Naive thymus-derived CD4-positive, alpha-beta T cell (primary cell): ENCODE measurements at regions of chr12 and their contacts with region 1.

Region 1: DNA sequence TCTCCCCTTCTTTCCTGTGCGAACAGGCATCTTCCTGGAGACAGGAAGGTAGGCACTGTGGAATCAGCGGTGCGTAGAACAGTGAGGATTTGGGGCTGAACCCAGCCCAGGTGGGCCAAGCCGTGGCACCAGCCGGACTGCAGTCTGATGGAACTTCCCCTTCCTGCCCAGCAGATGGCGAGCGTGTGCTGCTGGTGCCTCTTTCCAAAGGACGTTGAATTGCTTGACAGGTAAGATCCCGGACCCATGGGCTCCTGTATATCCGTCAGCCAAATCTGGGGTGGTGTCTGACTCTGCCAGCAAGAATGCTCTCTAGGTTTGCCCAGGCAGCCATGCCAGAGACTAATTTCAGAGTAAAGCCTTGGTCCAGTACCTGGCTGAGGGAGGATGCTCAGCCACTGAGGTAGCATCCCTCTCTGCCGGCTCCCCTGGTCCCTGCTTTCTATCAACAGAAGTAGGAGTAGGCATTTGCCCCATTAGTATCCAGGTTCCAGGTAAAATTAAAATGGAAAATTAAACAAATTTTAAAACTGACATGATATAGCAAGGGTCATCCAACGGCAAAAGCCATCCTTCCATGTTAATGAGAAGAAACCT is 21.1 kb upstream of the KCNA5 start:
- DNase-seq: peak in 6 of 9 donors; percentile 10 to 38 (median 18)
- ATAC-seq: peak; percentile 50
- H3K4me3 ChIP-seq: no peak overlapping the region
- H3K4me3 Mint-ChIP-seq: no peak overlapping the region
- H3K27ac ChIP-seq: no peak overlapping the region
- H3K27ac Mint-ChIP-seq: no peak overlapping the region
- H3K4me1 ChIP-seq: no peaks in the 10 kb centered on the region
- H3K4me1 Mint-ChIP-seq: peaks cover 0 to 1% (median 0%) of the 10 kb centered on the region in 7 donors
- H3K27me3 ChIP-seq: no peaks in the 10 kb centered on the region
- H3K27me3 Mint-ChIP-seq: peaks cover 23 to 44% (median 38%) of the 10 kb centered on the region in 5 donors

Region 2: DNA sequence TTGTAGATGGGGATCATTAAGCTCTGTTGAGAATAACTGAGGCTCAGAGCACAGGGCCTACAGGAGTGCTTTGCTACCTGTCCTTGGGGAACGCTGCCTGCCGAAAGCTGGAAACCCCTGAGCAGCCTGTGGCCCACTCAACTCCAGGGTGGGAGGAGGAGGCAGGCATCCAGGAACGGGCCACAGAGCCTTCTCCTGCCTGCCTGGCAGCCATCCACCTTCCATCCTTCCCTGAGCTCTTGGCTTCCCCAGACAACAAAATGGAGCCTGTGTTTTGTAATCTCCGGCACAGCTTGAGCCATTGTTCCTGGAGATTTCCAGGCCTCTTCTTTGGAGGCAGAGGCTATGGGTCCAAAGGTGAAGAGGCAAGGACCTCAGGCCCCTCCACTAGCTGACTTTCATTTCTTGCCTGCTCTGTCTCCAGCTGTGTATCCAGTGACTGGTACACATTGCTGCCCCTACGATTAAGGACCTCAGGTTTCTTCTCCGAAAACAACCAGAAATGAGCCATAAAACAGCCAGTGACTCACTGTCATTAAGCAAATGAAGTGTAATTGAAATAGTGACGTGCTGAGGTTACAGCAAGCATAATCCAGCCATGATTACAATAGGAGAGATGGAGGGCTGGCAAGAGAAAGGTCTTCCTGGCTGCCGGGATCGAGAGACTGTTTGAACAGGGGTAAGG is 35.3 kb before region 1 on chr12:
- CTCF ChIA-PET with region 1: no interaction called
- POLR2A ChIA-PET with region 1: no interaction called
- intact Hi-C with region 1: no loop called
- DNase-seq: no peak
- ATAC-seq: no peak
- H3K4me3 ChIP-seq: no peak overlapping the region
- H3K4me3 Mint-ChIP-seq: no peak overlapping the region
- H3K27ac ChIP-seq: no peak overlapping the region
- H3K27ac Mint-ChIP-seq: no peak overlapping the region
- H3K4me1 ChIP-seq: no peaks in the 10 kb centered on the region
- H3K4me1 Mint-ChIP-seq: no peaks in the 10 kb centered on the region
- H3K27me3 ChIP-seq: no peaks in the 10 kb centered on the region
- H3K27me3 Mint-ChIP-seq: peaks cover 8 to 37% (median 17%) of the 10 kb centered on the region in 5 donors

Region 3: GRCh38 chr12:5083955-5084849 is 61.6 kb after region 1 on chr12:
- CTCF ChIA-PET with region 1: no interaction called
- POLR2A ChIA-PET with region 1: no interaction called
- intact Hi-C with region 1: loop called (anchors 1 kb)
- DNase-seq: no peak
- ATAC-seq: no peak
- H3K4me3 ChIP-seq: no peak overlapping the region
- H3K4me3 Mint-ChIP-seq: no peak overlapping the region
- H3K27ac ChIP-seq: no peak overlapping the region
- H3K27ac Mint-ChIP-seq: no peak overlapping the region
- H3K4me1 ChIP-seq: no peaks in the 10 kb centered on the region
- H3K4me1 Mint-ChIP-seq: no peaks in the 10 kb centered on the region
- H3K27me3 ChIP-seq: no peaks in the 10 kb centered on the region
- H3K27me3 Mint-ChIP-seq: peaks cover 0 to 9% (median 0%) of the 10 kb centered on the region in 5 donors

Region 4: GRCh38 chr12:5442251-5443006 is 419.9 kb after region 1 on chr12:
- CTCF ChIA-PET with region 1: no interaction called
- POLR2A ChIA-PET with region 1: no interaction called
- intact Hi-C with region 1: loop called in 1 of 2 experiments (anchors 2 kb)
- DNase-seq: no peak
- ATAC-seq: no peak
- H3K4me3 ChIP-seq: no peak overlapping the region
- H3K4me3 Mint-ChIP-seq: no peak overlapping the region
- H3K27ac ChIP-seq: no peak overlapping the region
- H3K27ac Mint-ChIP-seq: no peak overlapping the region
- H3K4me1 ChIP-seq: no peaks in the 10 kb centered on the region
- H3K4me1 Mint-ChIP-seq: peaks cover 0 to 2% (median 0%) of the 10 kb centered on the region in 7 donors
- H3K27me3 ChIP-seq: no peaks in the 10 kb centered on the region
- H3K27me3 Mint-ChIP-seq: peaks cover 13 to 34% (median 18%) of the 10 kb centered on the region in 5 donors